Motor neuron (in vitro differentiated cells): ENCODE measurements at regions of chr9 and their contacts with region 1.

Region 1: GRCh38 chr9:19022206-19022605 is 10.8 kb downstream of the SAXO1 start:
- ATAC-seq: no peak
- H3K4me3 ChIP-seq: no peak overlapping the region
- H3K27ac ChIP-seq: no peak overlapping the region
- H3K4me1 ChIP-seq: no peaks in the 10 kb centered on the region

Region 2: DNA sequence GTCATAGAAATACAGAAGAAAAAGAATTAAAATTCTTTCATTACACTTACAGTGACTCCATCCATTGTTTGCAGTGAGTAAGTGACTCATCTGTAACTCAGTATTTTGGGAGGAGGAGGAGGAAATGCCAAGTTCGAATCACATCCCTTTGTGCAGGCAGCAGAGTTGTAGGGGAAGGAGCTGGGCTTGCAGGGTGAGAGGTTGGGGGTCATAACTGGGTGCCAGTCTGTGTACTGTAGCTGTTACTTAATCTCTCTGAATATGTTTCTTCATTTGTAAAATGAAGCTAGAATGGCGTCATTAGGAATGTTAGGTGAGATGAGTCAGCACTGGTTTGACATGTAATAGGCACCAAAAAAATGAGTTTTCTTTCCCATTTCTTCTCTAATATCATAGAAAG is 784.0 kb before region 1 on chr9:
- in situ Hi-C with region 1: loop called in 1 of 9 experiments (anchors 25 kb)
- ATAC-seq: peak in 3 of 8 experiments; percentile 49 to 86 (median 73)
- H3K4me3 ChIP-seq: no peak overlapping the region
- H3K27ac ChIP-seq: no peak overlapping the region
- H3K4me1 ChIP-seq: no peaks in the 10 kb centered on the region

Region 3: GRCh38 chr9:18490635-18491370 is 531.4 kb before region 1 on chr9:
- in situ Hi-C with region 1: loop called in 1 of 9 experiments (anchors 25 kb)
- ATAC-seq: peak in 7 of 8 experiments; percentile 36 to 85 (median 71)
- H3K4me3 ChIP-seq: no peak overlapping the region
- H3K27ac ChIP-seq: peak overlapping the region; percentile 12 to 43
- H3K4me1 ChIP-seq: peaks cover 32 to 53% of the 10 kb centered on the region in 2 donors

Region 4: DNA sequence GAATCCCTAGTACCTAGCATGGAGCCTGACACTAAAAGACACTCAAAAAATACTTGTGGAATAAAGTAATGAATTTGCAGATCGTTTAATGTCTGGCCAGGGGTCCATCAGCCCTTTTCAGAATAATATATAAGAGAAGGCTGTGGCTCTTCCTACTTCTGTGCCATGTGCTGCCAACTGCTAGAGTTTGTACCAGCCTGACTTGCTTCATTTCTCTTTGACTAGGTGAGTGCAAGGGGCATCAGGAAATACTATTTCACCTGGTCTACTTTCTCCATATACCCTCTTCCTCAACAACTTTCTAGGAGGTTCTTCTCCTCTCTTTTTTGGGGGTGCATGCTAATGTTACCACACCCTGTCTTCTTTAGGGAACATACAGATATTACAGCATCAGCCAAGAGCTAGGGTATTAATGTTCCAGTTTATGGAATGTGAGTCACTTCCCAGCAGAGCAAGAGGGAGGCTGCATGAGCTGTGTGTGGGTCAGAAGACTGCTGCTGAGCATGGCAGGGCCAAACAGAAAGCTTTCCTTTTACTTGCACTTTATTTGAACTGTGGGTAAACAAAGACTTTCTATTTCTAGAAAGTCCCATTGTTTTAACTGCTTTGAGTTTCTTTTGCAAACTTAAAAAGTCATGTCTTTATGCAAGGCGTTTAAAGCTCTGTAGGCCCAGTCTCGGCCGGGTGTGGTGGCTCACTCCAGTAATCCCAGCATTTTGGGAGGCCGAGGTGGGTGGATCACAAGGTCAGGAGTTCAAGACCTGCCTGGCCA is 389.4 kb before region 1 on chr9:
- in situ Hi-C with region 1: loop called in 1 of 9 experiments (anchors 25 kb)
- ATAC-seq: peak in 6 of 8 experiments; percentile 54 to 99 (median 92)
- H3K4me3 ChIP-seq: no peak overlapping the region
- H3K27ac ChIP-seq: no peak overlapping the region
- H3K4me1 ChIP-seq: no peaks in the 10 kb centered on the region

Region 5: DNA sequence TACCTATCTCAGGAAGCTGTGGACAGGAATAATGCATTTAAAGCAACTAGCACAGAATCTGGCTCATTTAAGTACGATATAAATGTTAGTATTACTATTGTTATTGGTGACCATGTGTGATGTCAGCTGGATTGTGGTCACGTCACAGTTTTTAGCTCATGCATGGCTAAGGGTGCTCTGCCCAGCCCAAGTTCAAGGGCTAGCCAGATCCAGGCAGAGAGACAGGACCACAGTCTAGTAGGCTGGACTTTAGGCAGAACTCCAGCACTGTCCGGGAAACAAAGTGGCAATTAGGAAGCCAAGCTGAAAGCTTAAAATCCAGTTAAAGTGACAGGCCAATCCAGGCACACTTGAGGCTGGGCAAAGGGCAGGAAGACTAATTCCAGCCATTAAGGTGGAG is 274.6 kb before region 1 on chr9:
- in situ Hi-C with region 1: no loop called
- ATAC-seq: peak in 2 of 8 experiments; percentile 60 to 67
- H3K4me3 ChIP-seq: no peak overlapping the region
- H3K27ac ChIP-seq: no peak overlapping the region
- H3K4me1 ChIP-seq: peaks cover 4 to 14% of the 10 kb centered on the region in 2 donors

Region 6: GRCh38 chr9:19286634-19287200 is 264.5 kb after region 1 on chr9:
- in situ Hi-C with region 1: no loop called
- ATAC-seq: peak in 3 of 8 experiments; percentile 34 to 90 (median 62)
- H3K4me3 ChIP-seq: no peak overlapping the region
- H3K27ac ChIP-seq: no peak overlapping the region
- H3K4me1 ChIP-seq: no peaks in the 10 kb centered on the region